PC-3 (cell line): ENCODE measurements at regions of chr2 and their contacts with region 1.

Region 1: DNA sequence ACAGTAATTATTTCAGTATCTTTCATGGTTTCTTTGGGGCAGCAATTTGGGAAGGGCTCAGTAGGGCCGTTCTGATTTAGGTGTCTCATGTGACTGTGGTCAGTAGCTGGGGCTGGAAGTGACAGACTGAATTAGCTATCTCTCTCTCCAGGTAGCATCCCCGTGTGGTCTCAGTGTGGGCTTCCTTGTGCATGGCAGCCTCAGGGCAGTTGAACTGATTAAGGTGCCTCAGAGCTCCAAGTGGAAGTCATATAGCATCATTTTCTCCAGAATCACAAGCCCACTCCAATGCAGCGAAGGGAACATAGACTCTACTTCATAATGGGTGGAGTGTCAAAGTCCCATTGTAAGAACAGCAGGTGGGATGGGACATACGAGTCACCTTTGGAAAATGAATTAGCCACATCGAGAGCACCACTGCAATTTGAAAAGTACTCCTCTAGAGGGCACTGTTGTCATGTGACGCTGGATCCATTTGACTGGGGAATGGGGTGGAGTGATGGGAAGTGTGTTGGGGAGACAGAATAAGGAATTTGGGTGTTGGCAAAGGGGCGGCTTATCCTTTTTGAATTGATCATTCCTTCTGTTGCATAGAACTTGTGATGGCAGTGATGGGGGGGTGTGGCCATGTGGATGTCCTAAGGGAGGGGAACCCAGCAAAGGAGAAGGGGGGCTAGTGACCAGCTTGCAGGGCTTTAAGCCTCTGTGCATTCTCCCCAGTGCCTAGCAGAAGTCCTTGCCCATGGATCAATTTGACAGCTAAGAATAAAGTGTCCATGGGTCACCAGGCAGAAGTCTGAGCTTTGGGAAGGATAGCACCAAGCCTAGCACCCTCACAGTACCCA is 39.3 kb upstream of the FAM136A start:
- DNase-seq: peak; percentile 88
- ATAC-seq: peak; percentile 75
- H3K4me3 ChIP-seq: no peak overlapping the region
- H3K27ac ChIP-seq: no peak overlapping the region
- H3K4me1 ChIP-seq: peaks cover 33% of the 10 kb centered on the region
- H3K27me3 ChIP-seq: no peaks in the 10 kb centered on the region
- CTCF ChIP-seq: peak; percentile 95

Region 2: GRCh38 chr2:69961496-69961895 is 379.6 kb before region 1 on chr2 and contains the start of gene ASPRV1:
- CTCF ChIA-PET with region 1: no interaction called
- POLR2A ChIA-PET with region 1: no interaction called
- intact Hi-C with region 1: no loop called
- DNase-seq: no peak
- ATAC-seq: no peak
- H3K4me3 ChIP-seq: no peak within 1 kb of the TSS
- H3K27ac ChIP-seq: no peak within 1 kb of the TSS
- H3K4me1 ChIP-seq: peaks cover 9% of the 10 kb centered on the region
- H3K27me3 ChIP-seq: no peaks in the 10 kb centered on the region
- CTCF ChIP-seq: no peak
- total RNA-seq, gene ASPRV1: 0.12 TPM in 1 of 2 replicates, not detected in the other

Region 3: DNA sequence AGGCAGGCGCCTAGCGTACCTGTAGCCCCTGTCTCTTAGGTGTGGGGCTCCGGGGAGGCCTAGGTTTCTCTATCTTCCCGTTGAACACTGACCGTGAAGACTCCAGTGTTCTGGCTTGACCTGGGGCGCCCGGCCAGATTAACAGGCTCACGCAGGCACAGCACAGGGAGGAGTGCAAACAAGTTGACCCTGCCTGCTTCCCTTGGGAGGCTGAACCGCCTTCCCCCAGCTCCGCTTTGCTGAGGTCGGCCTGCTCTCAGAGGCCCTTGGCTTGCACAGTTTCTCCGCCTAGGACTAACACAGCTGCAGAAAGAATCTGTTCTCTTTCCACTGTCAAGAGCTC is 82.6 kb before region 1 on chr2:
- CTCF ChIA-PET with region 1: no interaction called
- POLR2A ChIA-PET with region 1: no interaction called
- intact Hi-C with region 1: no loop called
- DNase-seq: peak; percentile 21
- ATAC-seq: peak; percentile 37
- H3K4me3 ChIP-seq: peak overlapping the region; percentile 98
- H3K27ac ChIP-seq: no peak overlapping the region
- H3K4me1 ChIP-seq: peaks cover 6% of the 10 kb centered on the region; the same call in 1 of the 2 replicates
- H3K27me3 ChIP-seq: no peaks in the 10 kb centered on the region
- CTCF ChIP-seq: no peak

Region 4: GRCh38 chr2:70480468-70480867 is 139.3 kb after region 1 on chr2:
- CTCF ChIA-PET with region 1: no interaction called
- POLR2A ChIA-PET with region 1: no interaction called
- intact Hi-C with region 1: loop called (anchors 5 kb)
- DNase-seq: no peak
- ATAC-seq: no peak
- H3K4me3 ChIP-seq: no peak overlapping the region
- H3K27ac ChIP-seq: no peak overlapping the region
- H3K4me1 ChIP-seq: peaks cover 25% of the 10 kb centered on the region
- H3K27me3 ChIP-seq: no peaks in the 10 kb centered on the region
- CTCF ChIP-seq: no peak

Region 5: DNA sequence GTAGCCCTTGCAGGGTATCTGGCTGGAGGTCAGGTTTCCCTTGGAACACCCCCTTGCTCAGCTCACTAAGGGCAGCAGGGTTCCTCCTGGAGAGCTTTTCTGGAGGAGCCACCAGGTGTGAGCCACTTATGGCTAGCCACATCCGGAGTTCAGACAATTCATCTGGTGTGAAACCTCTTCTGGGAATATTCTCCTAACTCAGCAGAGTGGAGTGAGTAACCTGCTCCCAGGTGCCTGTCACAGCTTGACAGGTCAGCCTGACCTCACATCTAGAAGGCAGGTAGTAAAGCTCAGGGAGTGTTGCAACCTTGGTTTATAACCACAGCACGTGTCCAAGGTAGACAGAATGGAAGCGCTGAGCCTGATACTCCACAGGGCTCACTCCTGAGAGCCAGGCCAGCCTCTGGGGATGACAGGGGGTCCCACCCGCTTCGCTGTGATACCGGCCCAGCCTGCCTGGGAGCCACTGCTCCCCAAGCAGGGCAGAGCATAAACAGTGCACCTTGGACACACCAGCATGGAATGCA is 275.1 kb after region 1 on chr2:
- CTCF ChIA-PET with region 1: interaction called, 5 read pairs
- POLR2A ChIA-PET with region 1: no interaction called
- intact Hi-C with region 1: loop called (anchors 1 kb)
- DNase-seq: peak; percentile 86
- ATAC-seq: peak; percentile 70
- H3K4me3 ChIP-seq: no peak overlapping the region
- H3K27ac ChIP-seq: 0 out of 2 replicates have a peak overlapping the region, but pooled peaks have one; percentile 4
- H3K4me1 ChIP-seq: peaks cover 20% of the 10 kb centered on the region
- H3K27me3 ChIP-seq: no peaks in the 10 kb centered on the region
- CTCF ChIP-seq: no peak

Region 6: GRCh38 chr2:70647873-70648481 is 306.8 kb after region 1 on chr2:
- CTCF ChIA-PET with region 1: no interaction called
- POLR2A ChIA-PET with region 1: no interaction called
- intact Hi-C with region 1: loop called (anchors 1 kb)
- DNase-seq: peak; percentile 85
- ATAC-seq: peak; percentile 76
- H3K4me3 ChIP-seq: no peak overlapping the region
- H3K27ac ChIP-seq: no peak overlapping the region
- H3K4me1 ChIP-seq: no peaks in the 10 kb centered on the region
- H3K27me3 ChIP-seq: peaks cover 13% of the 10 kb centered on the region
- CTCF ChIP-seq: peak; percentile 97